Mammary epithelial cell (primary cell): ENCODE measurements at regions of chr16 and their contacts with region 1.

Region 1: DNA sequence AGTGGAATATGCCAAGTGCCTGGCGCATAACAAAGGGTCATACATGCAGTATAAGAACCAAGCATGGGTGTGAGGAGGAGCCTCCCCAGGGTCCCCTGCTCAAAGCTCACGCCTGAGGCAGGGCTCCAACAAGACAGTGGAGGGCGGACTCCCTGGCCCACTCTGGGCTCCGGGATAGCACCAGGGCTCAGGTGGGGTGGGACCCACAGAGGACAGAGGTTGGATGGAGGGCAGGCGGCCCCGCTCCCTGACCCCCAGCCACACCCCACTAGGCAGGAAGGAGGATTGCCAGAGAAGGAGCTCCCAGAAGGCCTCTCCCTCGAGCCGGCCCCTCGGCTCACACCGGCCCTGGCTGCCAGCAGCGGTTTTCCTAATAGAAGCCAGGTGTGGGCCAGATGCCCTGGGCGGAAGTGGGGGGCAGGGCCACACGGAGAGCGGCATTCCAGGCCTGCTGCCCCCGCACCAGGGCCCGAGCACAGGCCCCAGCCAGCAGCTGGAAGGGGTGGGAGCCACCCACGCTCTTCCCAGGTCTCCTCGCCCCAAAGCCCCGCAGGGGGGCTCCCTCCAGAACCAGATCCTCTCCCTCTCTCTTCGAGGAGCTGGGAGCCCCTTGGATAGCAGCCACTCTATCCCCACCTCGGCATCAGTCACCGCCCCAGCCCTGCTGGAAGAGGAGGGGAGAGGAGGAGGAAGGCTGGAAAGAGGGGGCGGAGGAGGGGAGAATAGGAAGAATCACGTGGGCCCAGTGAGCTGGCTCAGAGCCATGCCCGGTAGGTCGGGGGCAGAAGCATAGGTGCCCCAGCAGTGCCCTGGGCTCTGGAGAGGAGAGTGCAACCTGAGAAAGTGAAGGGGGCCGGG is 21.0 kb downstream of the VASN start:
- DNase-seq: peak; percentile 62
- H3K4me3 ChIP-seq: no peak overlapping the region
- H3K27ac ChIP-seq: peak overlapping the region; percentile 74
- H3K4me1 ChIP-seq: peaks cover 24% of the 10 kb centered on the region
- H3K27me3 ChIP-seq: no peaks in the 10 kb centered on the region
- CTCF ChIP-seq: no peak

Region 2: GRCh38 chr16:4307215-4308037 is 85.2 kb before region 1 on chr16:
- CTCF ChIA-PET with region 1: no interaction called
- dilution Hi-C with region 1: loop called (anchors 5 kb)
- in situ Hi-C with region 1: no loop called
- intact Hi-C with region 1: no loop called
- DNase-seq: peak; percentile 95
- H3K4me3 ChIP-seq: peak overlapping the region; percentile 39 to 59 (median 54)
- H3K27ac ChIP-seq: peak overlapping the region; percentile 2
- H3K4me1 ChIP-seq: peaks cover 7% of the 10 kb centered on the region
- H3K27me3 ChIP-seq: no peaks in the 10 kb centered on the region
- CTCF ChIP-seq: no peak

Region 3: DNA sequence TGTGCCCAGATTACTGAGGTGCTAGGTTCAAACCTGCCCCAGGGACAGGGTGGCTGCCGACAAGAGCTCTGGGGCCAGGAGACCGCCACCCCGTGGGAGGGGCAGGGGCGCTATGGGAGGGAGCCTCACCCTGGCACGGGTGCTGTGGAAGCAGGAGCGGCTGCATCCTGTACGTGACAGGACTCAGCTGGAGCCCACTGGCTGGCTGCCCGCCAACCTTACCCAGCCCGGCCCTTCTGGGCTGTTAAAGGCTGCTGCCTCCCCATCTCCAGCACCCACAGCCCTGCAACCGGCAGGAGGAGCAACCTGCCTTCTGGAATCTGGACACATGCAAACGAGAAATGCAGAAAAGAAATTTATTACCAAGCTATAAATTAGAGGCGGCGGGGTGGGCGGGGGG is 52.7 kb before region 1 on chr16:
- CTCF ChIA-PET with region 1: no interaction called
- dilution Hi-C with region 1: loop called (anchors 5 kb)
- in situ Hi-C with region 1: no loop called
- intact Hi-C with region 1: no loop called
- DNase-seq: no peak
- H3K4me3 ChIP-seq: no peak overlapping the region
- H3K27ac ChIP-seq: no peak overlapping the region
- H3K4me1 ChIP-seq: no peaks in the 10 kb centered on the region
- H3K27me3 ChIP-seq: no peaks in the 10 kb centered on the region
- CTCF ChIP-seq: no peak

Region 4: GRCh38 chr16:4358831-4359561 is 33.6 kb before region 1 on chr16:
- CTCF ChIA-PET with region 1: interaction called, 3 read pairs
- dilution Hi-C with region 1: no loop called
- in situ Hi-C with region 1: loop called in 1 of 2 experiments (anchors 5 kb)
- intact Hi-C with region 1: no loop called
- DNase-seq: no peak
- H3K4me3 ChIP-seq: no peak overlapping the region
- H3K27ac ChIP-seq: no peak overlapping the region
- H3K4me1 ChIP-seq: no peaks in the 10 kb centered on the region
- H3K27me3 ChIP-seq: no peaks in the 10 kb centered on the region
- CTCF ChIP-seq: peak; percentile 71 to 95

Region 5: DNA sequence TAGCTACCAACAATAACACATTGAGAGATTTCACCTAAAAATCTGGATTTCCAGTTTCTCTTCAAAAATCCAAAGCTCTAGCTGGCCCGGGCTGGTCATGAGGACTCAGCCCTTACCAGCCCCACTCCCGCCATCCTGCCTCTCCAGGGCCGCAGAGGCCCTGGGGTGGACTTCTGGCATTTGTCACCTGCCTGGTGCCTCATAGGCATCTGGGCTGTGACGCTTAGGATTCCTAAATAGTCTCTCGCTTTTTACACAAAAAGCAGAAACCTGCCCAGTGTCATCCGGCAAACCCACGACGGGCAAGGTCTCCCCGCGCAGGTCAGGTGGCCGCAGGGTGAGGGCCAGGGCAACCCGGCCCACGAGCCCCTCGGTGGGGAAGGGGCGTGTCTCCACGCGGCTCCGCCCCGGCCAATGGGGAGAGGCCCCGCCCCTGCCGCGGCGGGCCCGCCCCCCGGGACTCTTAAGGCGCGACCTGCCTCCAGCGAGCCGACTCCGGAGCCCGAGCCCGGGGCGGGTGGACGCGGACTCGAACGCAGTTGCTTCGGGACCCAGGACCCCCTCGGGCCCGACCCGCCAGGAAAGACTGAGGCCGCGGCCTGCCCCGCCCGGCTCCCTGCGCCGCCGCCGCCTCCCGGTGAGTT is 21.1 kb before region 1 on chr16 and contains the start of gene VASN:
- CTCF ChIA-PET with region 1: no interaction called
- dilution Hi-C with region 1: no loop called
- in situ Hi-C with region 1: no loop called
- intact Hi-C with region 1: loop called (anchors 2 kb)
- DNase-seq: peak; percentile 44
- H3K4me3 ChIP-seq: peak within 1 kb of the TSS; percentile 37 to 54 (median 53)
- H3K27ac ChIP-seq: no peak within 1 kb of the TSS
- H3K4me1 ChIP-seq: peaks cover 75% of the 10 kb centered on the region
- H3K27me3 ChIP-seq: no peaks in the 10 kb centered on the region
- CTCF ChIP-seq: no peak
- total RNA-seq, gene VASN: 5.0 to 25.5 TPM